SK-N-SH (cell line): ENCODE measurements at regions of chr7 and their contacts with region 1.

Region 1: GRCh38 chr7:157336383-157337315 is at the start of gene DNAJB6:
- DNase-seq: peak; percentile 100
- H3K4me3 ChIP-seq: peak within 1 kb of the TSS; percentile 62 to 81
- H3K27ac ChIP-seq: peak within 1 kb of the TSS; percentile 76 to 89
- H3K4me1 ChIP-seq: peaks cover 20% of the 10 kb centered on the region in 2 experiments
- H3K27me3 ChIP-seq: no peaks in the 10 kb centered on the region
- CTCF ChIP-seq: no peak
- EP300 ChIP-seq: peak; percentile 39 to 94; a peak in 3 of 4 replicates
- RAD21 ChIP-seq: no peak
- polyA plus RNA-seq, gene DNAJB6: 176 and 185 TPM in 2 replicates

Region 2: GRCh38 chr7:157348548-157348947 is 11.9 kb after region 1 on chr7:
- CTCF ChIA-PET with region 1: interaction called, 29 read pairs
- POLR2A ChIA-PET with region 1: no interaction called
- DNase-seq: no peak
- H3K4me3 ChIP-seq: no peak overlapping the region
- H3K27ac ChIP-seq: no peak overlapping the region
- H3K4me1 ChIP-seq: peaks cover 10 to 20% of the 10 kb centered on the region in 2 experiments; a peak in 3 of 4 replicates
- H3K27me3 ChIP-seq: no peaks in the 10 kb centered on the region
- CTCF ChIP-seq: no peak
- EP300 ChIP-seq: no peak
- RAD21 ChIP-seq: no peak

Region 3: DNA sequence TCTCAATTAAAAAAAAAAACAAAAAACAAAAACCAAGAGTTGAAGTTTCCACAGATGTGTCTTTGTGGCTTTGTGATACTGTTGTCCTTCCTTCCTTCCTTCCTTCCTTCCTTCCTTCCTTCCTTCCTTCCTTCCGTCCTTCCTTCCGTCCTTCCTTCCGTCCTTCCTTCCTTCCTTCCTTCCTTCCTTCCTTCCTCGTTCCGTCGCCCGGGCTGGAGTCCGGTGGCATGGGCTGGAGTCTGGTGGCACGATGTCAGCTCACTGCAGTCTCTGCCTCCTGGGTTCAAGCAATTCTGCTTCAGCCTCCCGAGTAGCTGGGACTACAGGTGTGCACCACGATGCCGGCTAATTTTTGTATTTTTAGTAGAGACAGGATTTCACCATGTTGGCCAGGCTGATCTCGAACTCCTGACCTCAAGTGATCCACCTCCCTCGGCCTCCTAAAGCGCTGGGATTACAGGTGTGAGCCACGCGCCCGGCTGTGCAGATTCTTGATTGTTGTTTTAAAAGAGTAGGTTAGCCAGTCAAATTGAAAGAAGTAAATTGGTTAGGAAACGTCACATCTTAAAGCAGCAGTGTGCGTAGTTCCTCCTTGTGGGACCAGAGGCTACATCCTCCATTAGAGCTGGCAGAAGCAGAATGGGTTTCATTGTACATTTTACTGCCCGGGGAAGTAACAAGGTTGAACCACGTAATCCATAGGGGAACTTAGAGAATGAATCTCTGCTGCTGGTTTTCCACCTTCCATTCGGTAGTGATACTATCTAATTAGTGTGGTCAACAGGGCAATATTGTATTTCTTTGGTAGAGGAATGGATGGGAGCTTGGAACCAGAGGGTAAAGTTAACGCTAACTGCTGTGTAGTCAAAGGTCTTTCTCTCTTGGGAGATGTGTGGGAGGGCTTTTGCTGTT is 20.7 kb after region 1 on chr7:
- CTCF ChIA-PET with region 1: interaction called, 36 read pairs
- POLR2A ChIA-PET with region 1: no interaction called
- DNase-seq: no peak
- H3K4me3 ChIP-seq: no peak overlapping the region
- H3K27ac ChIP-seq: no peak overlapping the region; a peak in 1 of 4 replicates
- H3K4me1 ChIP-seq: peaks cover 13 to 36% of the 10 kb centered on the region in 2 experiments
- H3K27me3 ChIP-seq: no peaks in the 10 kb centered on the region
- CTCF ChIP-seq: no peak
- EP300 ChIP-seq: no peak
- RAD21 ChIP-seq: no peak

Region 4: GRCh38 chr7:157425079-157425731 is 88.6 kb after region 1 on chr7:
- CTCF ChIA-PET with region 1: no interaction called
- POLR2A ChIA-PET with region 1: no interaction called
- DNase-seq: no peak
- H3K4me3 ChIP-seq: no peak overlapping the region
- H3K27ac ChIP-seq: no peak overlapping the region
- H3K4me1 ChIP-seq: peaks cover 0 to 6% of the 10 kb centered on the region in 2 experiments; a peak in 1 of 4 replicates
- H3K27me3 ChIP-seq: no peaks in the 10 kb centered on the region
- CTCF ChIP-seq: no peak
- EP300 ChIP-seq: no peak
- RAD21 ChIP-seq: no peak

Region 5: GRCh38 chr7:157474689-157475088 is 138.0 kb after region 1 on chr7:
- CTCF ChIA-PET with region 1: no interaction called
- POLR2A ChIA-PET with region 1: no interaction called
- DNase-seq: no peak
- H3K4me3 ChIP-seq: no peak overlapping the region
- H3K27ac ChIP-seq: no peak overlapping the region
- H3K4me1 ChIP-seq: no peaks in the 10 kb centered on the region
- H3K27me3 ChIP-seq: no peaks in the 10 kb centered on the region
- CTCF ChIP-seq: peak; percentile 40
- EP300 ChIP-seq: no peak
- RAD21 ChIP-seq: no peak